ENCODE measurements at regions of chr1 and their contacts with region 1.

Region 1: GRCh38 chr1:202135221-202135721 is 9.3 kb downstream of the ARL8A start:
- DNase-seq: peak; percentile 40
- ATAC-seq: peak; percentile 97
- H3K4me3 Mint-ChIP-seq: no peak overlapping the region
- H3K27ac Mint-ChIP-seq: no peak overlapping the region
- H3K4me1 Mint-ChIP-seq: peaks cover 4% of the 10 kb centered on the region
- H3K27me3 Mint-ChIP-seq: no peaks in the 10 kb centered on the region
- CTCF ChIP-seq: peak; percentile 49

Region 2: DNA sequence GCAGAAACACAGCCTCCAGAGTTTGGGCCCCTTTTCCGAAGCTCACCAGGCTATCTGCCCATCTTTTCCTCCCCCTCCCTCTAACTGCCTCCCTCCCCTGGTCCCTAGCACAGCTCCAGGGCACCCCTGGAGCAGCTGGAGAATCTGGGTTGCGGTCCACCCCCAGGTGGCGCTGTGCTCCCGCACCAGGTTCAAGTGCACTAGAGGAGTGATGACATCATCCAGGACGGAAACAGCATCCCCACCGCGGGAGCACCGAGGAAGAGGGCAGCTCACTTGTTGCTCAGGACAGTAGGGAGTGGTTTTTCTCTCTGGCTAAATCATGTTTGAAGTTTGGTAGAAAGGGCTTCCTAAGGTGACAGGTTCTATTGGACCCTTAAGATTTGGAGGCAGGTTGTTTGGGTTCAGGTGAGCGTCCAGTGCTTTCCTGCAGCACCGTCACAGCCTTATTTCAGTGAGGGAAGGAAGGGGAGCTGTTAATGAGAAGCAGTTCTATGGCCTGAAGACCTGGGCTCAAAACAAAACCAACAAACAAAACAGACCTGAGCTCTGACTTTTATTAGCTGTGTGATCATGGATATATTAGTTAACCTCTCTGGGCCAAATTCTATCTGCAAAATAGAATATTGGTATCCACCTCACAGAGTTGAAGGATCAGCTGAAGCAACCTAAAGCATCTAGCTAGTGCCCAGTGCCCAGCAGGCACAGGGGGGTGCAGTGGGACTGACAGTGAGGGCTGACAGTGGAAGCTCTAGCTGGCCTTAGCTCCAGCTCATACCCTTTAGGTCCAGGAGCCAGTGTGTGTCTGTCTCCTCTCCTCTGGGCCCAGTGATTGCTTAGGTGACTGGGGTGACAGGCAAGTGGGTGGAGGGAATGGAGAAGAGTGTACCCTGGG is 239.1 kb before region 1 on chr1:
- CTCF ChIA-PET with region 1: interaction called, 4 read pairs
- POLR2A ChIA-PET with region 1: no interaction called
- intact Hi-C with region 1: loop called (anchors 1 kb)
- DNase-seq: peak; percentile 52
- ATAC-seq: peak; percentile 77
- H3K4me3 Mint-ChIP-seq: peak overlapping the region; percentile 55
- H3K27ac Mint-ChIP-seq: no peak overlapping the region
- H3K4me1 Mint-ChIP-seq: peaks cover 5% of the 10 kb centered on the region
- H3K27me3 Mint-ChIP-seq: peaks cover 27% of the 10 kb centered on the region
- CTCF ChIP-seq: no peak

Region 3: GRCh38 chr1:201999625-202000238 is 135.5 kb before region 1 on chr1:
- CTCF ChIA-PET with region 1: interaction called, 10 read pairs
- POLR2A ChIA-PET with region 1: no interaction called
- intact Hi-C with region 1: loop called (anchors 2 kb)
- DNase-seq: no peak
- ATAC-seq: peak; percentile 65
- H3K4me3 Mint-ChIP-seq: no peak overlapping the region
- H3K27ac Mint-ChIP-seq: no peak overlapping the region
- H3K4me1 Mint-ChIP-seq: no peaks in the 10 kb centered on the region
- H3K27me3 Mint-ChIP-seq: no peaks in the 10 kb centered on the region
- CTCF ChIP-seq: no peak

Region 4: GRCh38 chr1:202009326-202010179 is 125.7 kb before region 1 on chr1:
- CTCF ChIA-PET with region 1: interaction called, 6 read pairs
- POLR2A ChIA-PET with region 1: no interaction called
- intact Hi-C with region 1: loop called (anchors 1 kb)
- DNase-seq: no peak
- ATAC-seq: peak; percentile 65
- H3K4me3 Mint-ChIP-seq: peak overlapping the region; percentile 28
- H3K27ac Mint-ChIP-seq: no peak overlapping the region
- H3K4me1 Mint-ChIP-seq: peaks cover 10% of the 10 kb centered on the region
- H3K27me3 Mint-ChIP-seq: no peaks in the 10 kb centered on the region
- CTCF ChIP-seq: peak; percentile 64

Region 5: DNA sequence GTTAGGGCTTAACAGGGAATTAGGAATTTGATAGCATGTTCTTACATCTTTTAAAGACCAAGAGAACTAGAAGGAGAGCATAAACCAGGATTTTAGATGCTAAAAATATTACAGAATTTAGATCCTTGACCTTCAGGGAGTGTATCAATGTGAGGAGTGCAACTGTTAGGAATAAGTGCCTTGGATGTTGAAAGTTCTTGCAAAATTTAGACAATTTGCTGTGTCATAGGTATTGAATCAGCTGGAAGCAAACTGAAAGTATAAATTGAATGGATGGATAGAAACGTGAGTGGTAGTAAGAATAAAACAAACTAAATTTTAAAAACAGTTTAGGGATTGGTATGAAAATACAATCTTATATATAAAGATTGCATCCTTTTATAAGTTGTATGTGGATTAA is 241.0 kb after region 1 on chr1:
- CTCF ChIA-PET with region 1: no interaction called
- POLR2A ChIA-PET with region 1: no interaction called
- intact Hi-C with region 1: no loop called
- DNase-seq: no peak
- ATAC-seq: no peak
- H3K4me3 Mint-ChIP-seq: no peak overlapping the region
- H3K27ac Mint-ChIP-seq: no peak overlapping the region
- H3K4me1 Mint-ChIP-seq: peaks cover 6% of the 10 kb centered on the region
- H3K27me3 Mint-ChIP-seq: no peaks in the 10 kb centered on the region
- CTCF ChIP-seq: no peak